ENCODE measurements at regions of chr5 and their contacts with region 1.

Region 1: DNA sequence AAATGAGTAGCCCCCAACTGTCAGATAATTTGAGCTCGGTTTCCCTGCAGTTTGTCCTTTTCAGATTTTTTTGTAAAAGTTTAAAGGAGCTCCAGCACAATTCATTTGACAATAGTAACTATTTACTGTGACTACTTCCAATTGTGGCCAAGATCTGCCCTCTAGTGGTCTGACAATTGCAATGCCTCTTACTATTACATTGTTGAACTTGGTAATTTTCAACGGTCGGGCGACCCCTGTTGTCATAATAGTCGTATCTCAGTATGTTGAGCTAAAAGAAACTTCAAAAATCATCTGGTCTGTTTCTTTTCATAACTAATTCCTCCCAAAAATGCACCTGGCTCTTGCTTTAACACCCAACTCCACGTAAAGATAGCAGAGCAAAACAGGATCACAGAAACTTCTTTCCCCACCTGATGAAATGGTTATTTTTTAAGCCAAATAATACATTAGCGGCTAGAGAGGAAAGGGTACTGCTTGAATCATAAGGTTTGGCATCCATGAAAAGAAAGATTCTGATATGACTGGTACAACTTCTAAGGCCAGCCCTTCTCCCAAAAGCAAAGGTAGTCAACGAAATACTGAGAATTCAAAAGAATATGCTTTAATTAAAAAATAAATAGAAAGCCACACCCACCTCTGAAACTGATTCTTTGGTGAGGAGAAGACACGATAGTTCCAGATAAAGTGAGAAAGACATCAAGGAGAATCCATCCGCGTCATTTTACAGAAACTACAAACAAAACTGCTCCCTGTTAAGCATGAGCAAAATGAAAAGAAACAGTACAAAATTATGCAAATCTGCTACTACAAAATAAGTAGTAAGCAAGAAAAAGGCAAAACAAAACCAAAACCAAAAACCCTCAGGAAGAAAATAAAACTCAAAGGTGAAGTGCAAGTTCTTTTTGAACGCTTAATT is 76.9 kb upstream of the HTR4 start:
- DNase-seq: no peak

Region 2: GRCh38 chr5:147567917-147568598 is 1163.1 kb before region 1 on chr5:
- intact Hi-C with region 1: no loop called
- DNase-seq: no peak

Region 3: GRCh38 chr5:148443998-148444397 is 287.2 kb before region 1 on chr5:
- intact Hi-C with region 1: loop called in 1 of 2 experiments (anchors 10 kb)
- DNase-seq: no peak

Region 4: DNA sequence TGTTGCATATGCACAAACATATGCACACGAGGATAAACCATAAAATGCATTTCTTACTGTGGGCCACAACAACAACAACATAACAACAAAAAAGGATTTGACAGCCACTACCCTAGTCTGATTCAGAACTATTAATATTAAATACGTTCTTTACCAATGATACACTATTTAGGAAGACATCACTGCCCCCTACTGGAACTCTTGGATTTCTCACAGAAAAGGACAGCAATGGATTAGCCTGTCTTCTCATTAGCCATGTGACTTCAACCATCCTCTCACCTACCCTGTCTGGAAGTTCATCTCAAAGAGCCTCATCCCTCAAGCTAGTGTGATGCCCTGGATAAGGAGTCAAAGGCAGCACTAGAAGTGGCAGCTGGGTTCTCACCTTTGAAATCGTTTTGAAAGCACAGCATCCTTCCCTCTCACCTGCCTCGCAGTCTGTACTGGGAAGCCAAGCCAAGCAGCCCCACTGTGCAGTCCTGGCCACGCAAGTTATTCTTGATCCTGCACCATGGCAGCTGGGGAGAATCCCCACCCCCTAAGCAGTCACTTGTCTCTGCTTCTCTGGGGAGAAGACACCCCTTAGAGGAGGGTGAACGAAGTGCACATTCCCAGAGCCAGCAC is 267.1 kb after region 1 on chr5:
- intact Hi-C with region 1: loop called (anchors 10 kb)
- DNase-seq: no peak

Region 5: GRCh38 chr5:149114403-149115312 is 383.5 kb after region 1 on chr5:
- intact Hi-C with region 1: loop called in 1 of 2 experiments (anchors 10 kb)
- DNase-seq: no peak